Heart left ventricle (tissue), 16 donors: ENCODE measurements at regions of chr5 and their contacts with region 1.

Region 1: DNA sequence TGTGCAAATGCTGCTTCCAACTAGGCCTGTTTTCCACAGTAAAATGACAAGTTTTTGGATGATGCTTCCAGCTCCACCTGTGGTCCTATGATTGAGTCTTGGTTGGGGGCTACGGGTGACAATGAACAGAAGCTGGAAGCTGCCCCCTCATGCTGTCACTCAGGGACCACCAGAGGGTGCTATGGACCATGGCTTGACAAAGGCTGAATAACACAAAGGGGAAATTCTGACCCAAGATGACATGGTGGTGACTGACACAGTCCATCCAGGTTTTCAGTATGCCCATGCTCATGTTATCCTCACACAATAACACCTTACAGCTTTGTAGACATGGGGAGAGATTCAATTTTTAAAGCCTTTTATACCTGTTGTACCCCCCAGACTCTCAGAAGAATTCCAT is 23.9 kb upstream of the SAP30L start:
- DNase-seq: no peak
- ATAC-seq: peak in 1 of 4 donors; percentile 32
- H3K4me3 ChIP-seq: no peak overlapping the region
- H3K27ac ChIP-seq: no peak overlapping the region
- H3K4me1 ChIP-seq: no peaks in the 10 kb centered on the region
- H3K27me3 ChIP-seq: no peaks in the 10 kb centered on the region
- CTCF ChIP-seq: peak in 10 of 12 donors; percentile 12 to 47 (median 30)
- POLR2A ChIP-seq: no peak

Region 2: DNA sequence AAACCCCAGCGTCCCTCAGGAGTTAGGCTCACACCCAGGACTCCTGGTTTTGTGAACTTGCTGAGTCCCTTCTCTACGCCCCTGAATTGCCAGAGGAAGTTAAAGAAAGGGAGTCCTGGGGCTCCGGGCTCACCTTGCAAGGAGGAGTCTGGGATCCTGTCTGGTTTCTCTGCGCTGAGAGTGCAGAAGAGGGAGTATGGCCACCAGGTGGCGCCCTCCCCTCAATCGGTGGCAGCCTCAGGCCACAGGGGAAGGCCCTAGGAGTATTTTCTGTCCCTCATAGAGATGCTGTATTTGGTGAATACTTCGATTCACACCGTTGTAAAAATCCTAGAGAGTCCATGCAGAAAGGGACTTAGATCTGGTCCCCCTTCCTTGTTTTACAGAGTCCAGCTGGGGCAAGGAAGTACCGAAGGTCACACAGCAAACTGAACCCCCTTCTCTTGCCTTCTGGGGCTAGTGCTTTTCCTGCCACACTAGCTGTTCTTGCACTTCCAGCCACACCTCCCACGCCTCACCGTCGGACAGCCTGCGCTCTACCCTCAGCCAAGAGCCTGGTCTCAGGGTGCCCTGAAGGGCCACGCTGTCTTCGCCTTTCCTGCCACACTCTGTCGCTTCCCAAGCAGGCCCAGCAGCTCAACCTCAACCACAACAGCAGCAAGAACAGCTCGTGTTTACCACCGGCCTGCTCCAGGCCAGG is 45.9 kb after region 1 on chr5:
- intact Hi-C with region 1: loop called in 1 of 10 experiments (anchors 2 kb)
- DNase-seq: peak; percentile 74 to 85 (median 77)
- ATAC-seq: peak; percentile 79 to 92 (median 92)
- H3K4me3 ChIP-seq: no peak overlapping the region
- H3K27ac ChIP-seq: peak overlapping the region in 3 of 12 donors; percentile 41 to 60 (median 48)
- H3K4me1 ChIP-seq: peaks cover 0 to 18% (median 4%) of the 10 kb centered on the region in 12 donors
- H3K27me3 ChIP-seq: peaks cover 2 to 43% (median 25%) of the 10 kb centered on the region in 9 donors
- CTCF ChIP-seq: peak; percentile 87 to 96 (median 95)
- POLR2A ChIP-seq: no peak